ENCODE measurements at regions of chr12 and their contacts with region 1.

Region 1: DNA sequence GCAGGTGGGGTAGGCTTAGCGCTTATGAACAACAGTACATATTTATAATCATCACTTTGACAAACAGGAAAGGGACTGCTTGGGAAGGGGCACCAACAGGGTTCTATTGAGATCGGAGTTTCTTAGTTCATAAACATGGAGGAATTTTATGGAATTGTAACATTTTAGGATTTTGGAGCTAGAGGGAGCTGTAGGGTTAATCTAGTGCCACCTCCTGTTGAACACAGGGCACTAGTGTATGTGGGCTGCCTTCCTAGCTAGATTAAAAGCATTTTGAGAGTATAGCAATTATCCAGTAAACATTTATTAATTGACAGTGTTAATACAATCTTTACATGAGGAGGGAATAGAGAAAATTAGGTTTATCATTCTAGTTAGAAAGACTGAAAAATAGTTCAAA is 23.1 kb upstream of the TBC1D30 start:
- DNase-seq: no peak
- CTCF ChIP-seq: peak; percentile 24

Region 2: DNA sequence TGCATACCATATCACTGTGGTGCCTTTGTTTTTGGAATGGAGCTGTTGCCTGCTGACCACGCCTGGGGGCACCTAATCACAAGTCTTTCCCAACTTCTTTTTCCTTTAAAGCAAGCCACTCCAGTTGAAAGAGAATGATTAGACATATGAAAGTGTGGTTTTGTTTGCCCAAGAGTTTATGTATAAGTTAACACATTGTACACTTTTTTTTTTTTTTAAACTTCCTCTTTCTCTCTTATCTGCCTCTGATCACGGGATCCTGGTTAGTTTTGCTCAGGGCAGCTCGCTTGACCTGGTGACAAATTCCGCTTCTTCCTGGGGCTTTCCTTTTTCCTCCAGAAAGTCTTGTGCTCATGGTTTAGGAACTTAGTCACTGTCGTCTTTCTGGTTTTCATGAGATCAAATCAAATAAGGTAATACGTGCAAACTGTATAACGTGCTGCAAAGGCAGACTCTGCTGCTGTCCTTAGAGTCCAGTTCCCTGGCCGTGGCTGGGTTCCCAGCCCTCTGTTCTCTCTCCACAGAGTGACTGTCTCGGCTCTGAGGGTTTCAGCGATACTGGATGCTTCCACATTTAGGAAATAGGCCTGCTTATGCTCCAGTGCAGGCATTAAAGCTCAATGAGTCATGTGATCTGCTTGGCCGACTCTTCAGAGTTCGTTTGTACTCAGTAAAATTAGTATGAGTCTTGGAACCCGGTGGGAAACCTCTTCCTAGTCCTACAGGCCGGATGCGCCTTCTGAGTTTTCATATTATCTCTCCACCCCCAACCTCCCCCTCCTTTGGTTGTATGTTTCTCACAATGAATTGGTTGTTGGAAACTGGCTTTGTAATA is 175.9 kb before region 1 on chr12:
- CTCF ChIA-PET with region 1: no interaction called
- POLR2A ChIA-PET with region 1: no interaction called
- DNase-seq: peak; percentile 49
- CTCF ChIP-seq: peak; percentile 6

Region 3: GRCh38 chr12:64824500-64825142 is 23.2 kb after region 1 on chr12 and contains the start of gene TBC1D30:
- CTCF ChIA-PET with region 1: interaction called, 15 read pairs
- POLR2A ChIA-PET with region 1: no interaction called
- DNase-seq: peak; percentile 45
- CTCF ChIP-seq: no peak

Region 4: DNA sequence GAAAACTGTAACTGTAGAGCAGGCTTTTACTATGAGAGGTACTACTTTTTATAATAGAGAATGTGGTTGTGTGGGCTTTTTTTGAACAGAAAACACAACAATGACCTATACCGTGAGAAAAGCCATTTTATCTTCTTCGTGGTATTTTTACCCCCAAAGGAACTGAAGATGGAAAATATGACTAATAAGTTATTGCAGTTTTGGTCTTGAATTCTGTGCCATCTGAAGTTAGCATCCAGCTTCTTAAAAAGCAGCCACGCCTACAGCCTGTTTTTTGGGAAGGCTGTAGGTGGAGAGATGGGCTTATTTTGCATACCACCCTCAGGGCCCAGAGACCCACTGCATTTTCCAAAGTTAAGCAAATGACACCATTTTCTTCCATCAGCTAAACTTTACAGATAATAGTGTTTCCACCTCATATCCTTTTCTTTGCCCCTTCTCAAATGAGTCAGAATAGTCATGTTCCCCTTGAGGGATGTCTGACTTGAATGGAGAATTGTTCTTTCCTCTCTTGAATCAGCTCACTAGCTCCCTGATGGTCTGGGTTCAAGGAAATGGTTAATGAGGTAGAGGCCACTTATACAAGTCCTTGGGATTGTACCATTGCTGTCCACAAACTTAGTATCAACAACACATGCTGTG is 76.1 kb after region 1 on chr12:
- CTCF ChIA-PET with region 1: interaction called, 20 read pairs
- POLR2A ChIA-PET with region 1: interaction called, 6 read pairs
- DNase-seq: peak; percentile 63
- CTCF ChIP-seq: no peak

Region 5: DNA sequence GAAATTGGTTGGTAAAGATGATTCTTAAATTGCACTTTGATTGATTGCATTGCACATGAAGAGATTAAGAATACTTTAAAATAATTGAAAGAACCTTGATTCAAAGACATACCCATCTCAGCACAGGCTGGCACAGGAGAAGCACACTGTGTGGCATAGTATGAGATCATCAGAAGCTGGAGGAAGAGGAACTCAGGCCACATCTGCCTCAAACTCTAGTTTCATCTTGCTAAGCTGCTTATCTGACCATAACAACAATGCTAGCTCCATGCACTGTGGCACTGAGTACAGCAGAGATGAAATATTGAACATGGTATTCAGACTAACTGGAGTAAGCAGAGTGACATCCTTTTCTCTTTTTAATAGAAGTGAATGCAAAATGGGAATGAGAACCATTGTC is 122.2 kb after region 1 on chr12:
- CTCF ChIA-PET with region 1: no interaction called
- POLR2A ChIA-PET with region 1: no interaction called
- DNase-seq: no peak
- CTCF ChIP-seq: no peak

Region 6: GRCh38 chr12:65106948-65107347 is 305.6 kb after region 1 on chr12:
- CTCF ChIA-PET with region 1: interaction called, 57 read pairs
- POLR2A ChIA-PET with region 1: no interaction called
- DNase-seq: peak; percentile 13
- CTCF ChIP-seq: peak; percentile 21

Region 7: DNA sequence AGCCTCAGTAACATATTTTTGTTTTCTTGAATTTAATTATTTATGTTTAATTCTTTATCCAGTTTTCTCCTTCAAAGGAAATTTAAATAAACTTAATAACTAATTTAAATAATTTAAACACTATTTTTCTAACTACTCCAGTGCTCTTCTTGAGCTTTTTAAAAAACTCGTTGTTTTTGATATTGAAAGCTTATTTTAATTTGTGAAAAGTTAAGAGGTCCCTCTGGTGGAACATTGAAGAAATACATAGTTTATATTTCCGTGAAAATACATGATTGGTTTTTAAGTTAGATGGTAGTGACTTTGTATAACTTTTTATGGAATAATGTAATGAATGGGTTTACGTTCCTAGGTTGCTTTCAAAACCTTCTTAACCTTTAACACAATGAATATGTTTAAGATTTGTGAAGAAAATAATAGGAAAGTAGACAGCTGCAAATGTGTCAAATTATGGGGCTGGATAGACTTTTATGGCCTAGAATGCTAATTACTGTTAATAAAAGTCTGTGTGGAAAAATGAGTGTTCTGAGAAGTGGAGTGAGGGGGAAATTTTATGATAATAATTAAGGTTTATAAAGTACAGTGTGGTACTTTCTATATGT is 431.2 kb after region 1 on chr12:
- CTCF ChIA-PET with region 1: interaction called, 10 read pairs
- POLR2A ChIA-PET with region 1: no interaction called
- DNase-seq: peak; percentile 14
- CTCF ChIP-seq: peak; percentile 12

Measured in GM10248 (cell line).